ENCODE measurements at regions of chr12 and their contacts with region 1.

Region 1: DNA sequence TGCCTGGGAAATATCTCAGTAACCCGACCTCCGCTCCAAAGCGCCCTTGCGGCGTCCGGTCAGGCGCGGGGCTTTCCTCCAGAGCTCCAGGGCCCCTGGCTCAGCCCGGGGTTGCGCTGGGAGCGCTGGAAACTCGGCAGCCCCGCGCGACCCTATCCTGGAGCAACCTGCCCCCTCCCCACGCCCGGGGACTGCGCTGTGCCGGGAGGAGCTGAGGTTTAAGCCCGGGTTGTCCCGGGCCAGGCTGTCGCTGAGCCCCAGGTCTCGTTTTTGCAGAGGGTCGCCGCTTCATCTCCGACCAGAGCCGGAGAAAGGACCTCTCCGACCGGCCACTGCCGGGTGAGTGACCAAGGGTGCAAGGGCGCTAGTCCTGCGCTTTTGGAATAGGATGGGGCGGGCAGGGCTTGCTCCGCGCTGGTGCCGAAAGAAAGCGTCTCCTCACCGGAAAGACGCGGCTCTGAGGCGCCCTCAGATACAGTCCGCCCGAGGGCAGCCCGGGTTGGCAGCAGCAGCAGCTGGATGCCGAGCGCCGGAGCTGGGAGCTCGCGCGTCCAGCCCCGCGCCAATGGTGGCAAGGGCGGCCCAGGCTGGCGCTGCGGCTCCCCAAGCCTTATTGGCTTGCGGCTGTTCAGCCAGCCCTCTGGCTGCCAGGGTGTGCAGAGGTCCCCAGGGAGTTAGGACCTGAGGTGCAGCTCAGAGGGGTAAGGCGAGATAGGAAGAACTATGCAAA is 1.5 kb downstream of the SPX start:
- DNase-seq: peak; percentile 55
- H3K4me3 ChIP-seq: peak overlapping the region; percentile 61 to 73 (median 63)
- H3K27ac ChIP-seq: no peak overlapping the region
- H3K4me1 ChIP-seq: peaks cover 4% of the 10 kb centered on the region
- H3K27me3 ChIP-seq: peaks cover 6% of the 10 kb centered on the region
- CTCF ChIP-seq: no peak

Region 2: DNA sequence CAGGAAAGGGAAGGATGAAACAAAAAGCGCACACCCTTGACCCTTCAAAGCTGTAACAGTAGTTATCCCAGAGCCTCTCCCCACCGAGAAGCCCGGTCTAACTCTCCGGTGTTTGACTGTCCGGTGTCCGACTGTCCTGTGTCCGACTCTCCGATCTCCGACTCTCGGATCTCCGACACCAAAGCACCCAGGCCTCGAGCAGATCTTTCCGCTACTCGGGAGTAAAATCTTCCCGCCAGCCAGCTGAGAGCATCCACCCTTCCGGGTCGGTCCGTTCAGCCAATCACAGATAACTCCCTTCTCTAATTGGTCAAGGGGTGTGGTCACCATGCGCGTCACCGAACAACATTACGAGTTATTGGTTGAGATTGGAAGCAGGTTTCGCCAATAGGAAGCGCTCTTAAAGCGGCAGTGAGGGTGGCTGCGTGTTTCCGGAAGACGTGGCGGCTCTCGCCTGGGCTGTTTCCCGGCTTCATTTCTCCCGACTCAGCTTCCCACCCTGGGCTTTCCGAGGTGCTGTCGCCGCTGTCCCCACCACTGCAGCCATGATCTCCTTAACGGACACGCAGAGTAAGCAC is 26.1 kb before region 1 on chr12 and contains the starts of genes GOLT1B and RECQL:
- CTCF ChIA-PET with region 1: no interaction called
- dilution Hi-C with region 1: no loop called
- in situ Hi-C with region 1: no loop called
- intact Hi-C with region 1: loop called (anchors 2 kb)
- DNase-seq: peak; percentile 97
- H3K4me3 ChIP-seq: peak within 1 kb of the TSS; percentile 81 to 96 (median 90)
- H3K27ac ChIP-seq: peak within 1 kb of the TSS; percentile 78
- H3K4me1 ChIP-seq: peaks cover 16% of the 10 kb centered on the region
- H3K27me3 ChIP-seq: no peaks in the 10 kb centered on the region
- CTCF ChIP-seq: no peak
- total RNA-seq, gene GOLT1B: 38.2 to 46.7 TPM
- total RNA-seq, gene RECQL: 55.3 to 57.9 TPM

Region 3: DNA sequence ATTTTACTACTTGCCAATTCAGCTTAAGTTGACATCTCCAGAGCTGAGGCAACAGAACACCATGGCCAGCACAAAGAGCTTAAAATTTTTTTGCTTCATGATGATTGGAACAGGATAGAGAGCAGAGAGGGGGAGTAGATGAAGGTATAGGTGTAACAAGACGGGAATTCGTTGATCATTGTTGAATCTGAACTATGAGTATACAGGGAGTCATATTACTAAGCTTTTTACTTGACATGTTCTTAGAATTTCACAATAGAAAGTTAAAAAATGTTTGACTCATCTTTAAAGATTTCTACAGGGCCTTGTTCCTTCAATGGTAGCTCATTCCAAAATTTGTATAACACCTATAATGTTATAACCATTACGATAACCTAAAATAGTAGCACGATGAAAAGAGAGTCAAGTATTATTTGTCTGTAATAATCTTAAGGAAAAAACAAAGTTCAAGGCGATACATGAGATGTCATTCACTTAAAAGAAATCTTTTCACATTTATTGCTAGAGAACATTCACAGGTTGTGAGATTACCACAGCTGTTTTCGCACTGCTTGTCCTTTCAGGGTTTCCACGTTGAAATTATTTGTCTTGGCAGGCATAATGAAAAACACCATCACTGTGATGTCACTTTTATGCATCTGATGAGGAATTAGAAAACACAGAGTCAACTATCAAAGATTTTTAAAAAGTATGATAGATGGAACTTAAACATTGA is 32.4 kb after region 1 on chr12:
- CTCF ChIA-PET with region 1: no interaction called
- dilution Hi-C with region 1: no loop called
- in situ Hi-C with region 1: no loop called
- intact Hi-C with region 1: loop called (anchors 1 kb)
- DNase-seq: peak; percentile 46
- H3K4me3 ChIP-seq: no peak overlapping the region
- H3K27ac ChIP-seq: no peak overlapping the region
- H3K4me1 ChIP-seq: no peaks in the 10 kb centered on the region
- H3K27me3 ChIP-seq: no peaks in the 10 kb centered on the region
- CTCF ChIP-seq: no peak

Region 4: DNA sequence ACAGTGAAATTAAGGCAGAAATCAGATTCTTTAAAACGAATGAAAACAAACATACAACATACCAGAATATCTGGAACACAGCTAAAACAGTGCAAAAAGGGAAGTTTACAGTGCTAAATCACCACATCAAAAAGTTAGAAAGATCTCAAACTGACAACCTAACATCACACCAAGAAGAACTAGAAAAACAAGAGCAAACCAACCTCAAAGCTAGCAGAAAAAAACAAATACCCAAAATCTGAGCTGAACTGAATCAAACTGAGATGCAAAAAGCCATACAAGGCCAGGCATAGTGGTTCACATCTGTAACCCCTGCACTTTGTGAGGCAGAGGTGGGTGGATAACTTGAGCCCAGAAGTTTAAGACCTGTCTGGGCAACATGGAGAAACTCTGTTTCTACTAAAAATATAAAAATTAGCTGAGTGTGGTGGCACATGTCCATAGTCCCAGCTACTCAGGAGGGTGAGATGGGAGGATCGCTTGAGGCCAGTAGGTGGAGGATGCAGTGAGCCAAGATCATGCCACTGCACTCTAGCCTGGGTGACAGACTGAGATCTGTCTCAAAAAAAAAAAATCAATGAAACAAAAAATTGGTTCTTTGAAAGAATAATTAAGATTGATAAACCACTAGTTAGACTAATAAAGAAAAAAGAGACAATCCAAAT is 163.2 kb after region 1 on chr12:
- CTCF ChIA-PET with region 1: no interaction called
- dilution Hi-C with region 1: no loop called
- in situ Hi-C with region 1: no loop called
- intact Hi-C with region 1: no loop called
- DNase-seq: no peak
- H3K4me3 ChIP-seq: no peak overlapping the region
- H3K27ac ChIP-seq: no peak overlapping the region
- H3K4me1 ChIP-seq: no peaks in the 10 kb centered on the region
- H3K27me3 ChIP-seq: peaks cover 2% of the 10 kb centered on the region
- CTCF ChIP-seq: no peak

Measured in mammary epithelial cell (primary cell).